Sigmoid colon (tissue), 7 donors: ENCODE measurements at regions of chr10 and their contacts with region 1.

Region 1: GRCh38 chr10:11515596-11516430 is 95.6 kb downstream of the USP6NL start:
- DNase-seq: no peak
- H3K4me3 ChIP-seq: no peak overlapping the region
- H3K27ac ChIP-seq: no peak overlapping the region
- H3K4me1 ChIP-seq: no peaks in the 10 kb centered on the region
- H3K27me3 ChIP-seq: no peaks in the 10 kb centered on the region
- CTCF ChIP-seq: peak; percentile 65 to 78 (median 72)
- EP300 ChIP-seq: no peak
- POLR2A ChIP-seq: no peak

Region 2: GRCh38 chr10:11725912-11726311 is 210.1 kb after region 1 on chr10:
- intact Hi-C with region 1: loop called (anchors 1 kb)
- DNase-seq: no peak
- H3K4me3 ChIP-seq: no peak overlapping the region
- H3K27ac ChIP-seq: no peak overlapping the region
- H3K4me1 ChIP-seq: no peaks in the 10 kb centered on the region
- H3K27me3 ChIP-seq: no peaks in the 10 kb centered on the region
- CTCF ChIP-seq: no peak
- EP300 ChIP-seq: no peak
- POLR2A ChIP-seq: no peak

Region 3: GRCh38 chr10:11757821-11758463 is 242.1 kb after region 1 on chr10:
- intact Hi-C with region 1: loop called (anchors 2 kb)
- DNase-seq: peak; percentile 91
- H3K4me3 ChIP-seq: no peak overlapping the region
- H3K27ac ChIP-seq: peak overlapping the region in 3 of 4 donors; percentile 34 to 55 (median 52)
- H3K4me1 ChIP-seq: peaks cover 0 to 15% (median 0%) of the 10 kb centered on the region in 4 donors
- H3K27me3 ChIP-seq: no peaks in the 10 kb centered on the region
- CTCF ChIP-seq: peak; percentile 69 to 89 (median 80)
- EP300 ChIP-seq: no peak
- POLR2A ChIP-seq: no peak

Region 4: GRCh38 chr10:11853468-11853867 is 337.7 kb after region 1 on chr10:
- intact Hi-C with region 1: no loop called
- DNase-seq: peak; percentile 6
- H3K4me3 ChIP-seq: no peak overlapping the region
- H3K27ac ChIP-seq: no peak overlapping the region
- H3K4me1 ChIP-seq: no peaks in the 10 kb centered on the region
- H3K27me3 ChIP-seq: no peaks in the 10 kb centered on the region
- CTCF ChIP-seq: no peak
- EP300 ChIP-seq: no peak
- POLR2A ChIP-seq: no peak